ENCODE measurements at regions of chr3 and their contacts with region 1.

Region 1: GRCh38 chr3:12287727-12288191 is 1.1 kb upstream of the PPARG start:
- DNase-seq: peak; percentile 44
- ATAC-seq: peak; percentile 70
- H3K4me3 Mint-ChIP-seq: peak overlapping the region; percentile 52
- H3K27ac Mint-ChIP-seq: no peak overlapping the region
- H3K4me1 Mint-ChIP-seq: peaks cover 4% of the 10 kb centered on the region
- H3K27me3 Mint-ChIP-seq: peaks cover 47% of the 10 kb centered on the region

Region 2: GRCh38 chr3:12187448-12188327 is 100.1 kb before region 1 on chr3:
- CTCF ChIA-PET with region 1: no interaction called
- POLR2A ChIA-PET with region 1: no interaction called
- intact Hi-C with region 1: no loop called
- DNase-seq: peak; percentile 90
- ATAC-seq: peak; percentile 92
- H3K4me3 Mint-ChIP-seq: peak overlapping the region; percentile 56
- H3K27ac Mint-ChIP-seq: peak overlapping the region; percentile 94
- H3K4me1 Mint-ChIP-seq: peaks cover 52% of the 10 kb centered on the region
- H3K27me3 Mint-ChIP-seq: peaks cover 5% of the 10 kb centered on the region

Region 3: GRCh38 chr3:12273045-12273695 is 14.6 kb before region 1 on chr3:
- CTCF ChIA-PET with region 1: no interaction called
- POLR2A ChIA-PET with region 1: no interaction called
- intact Hi-C with region 1: no loop called
- DNase-seq: no peak
- ATAC-seq: no peak
- H3K4me3 Mint-ChIP-seq: no peak overlapping the region
- H3K27ac Mint-ChIP-seq: no peak overlapping the region
- H3K4me1 Mint-ChIP-seq: no peaks in the 10 kb centered on the region
- H3K27me3 Mint-ChIP-seq: peaks cover 9% of the 10 kb centered on the region

Region 4: GRCh38 chr3:12458901-12459558 is 171.3 kb after region 1 on chr3:
- CTCF ChIA-PET with region 1: no interaction called
- POLR2A ChIA-PET with region 1: no interaction called
- intact Hi-C with region 1: loop called in 1 of 2 experiments (anchors 5 kb)
- DNase-seq: no peak
- ATAC-seq: no peak
- H3K4me3 Mint-ChIP-seq: no peak overlapping the region
- H3K27ac Mint-ChIP-seq: no peak overlapping the region
- H3K4me1 Mint-ChIP-seq: peaks cover 26% of the 10 kb centered on the region
- H3K27me3 Mint-ChIP-seq: no peaks in the 10 kb centered on the region

Region 5: GRCh38 chr3:13022348-13023234 is 734.8 kb after region 1 on chr3:
- CTCF ChIA-PET with region 1: no interaction called
- POLR2A ChIA-PET with region 1: no interaction called
- intact Hi-C with region 1: no loop called
- DNase-seq: no peak
- ATAC-seq: no peak
- H3K4me3 Mint-ChIP-seq: no peak overlapping the region
- H3K27ac Mint-ChIP-seq: no peak overlapping the region
- H3K4me1 Mint-ChIP-seq: peaks cover 3% of the 10 kb centered on the region
- H3K27me3 Mint-ChIP-seq: no peaks in the 10 kb centered on the region